ENCODE measurements at regions of chr17 and their contacts with region 1.

Region 1: GRCh38 chr17:40287494-40288369 is at the start of gene CDC6:
- DNase-seq: peak; percentile 97 to 99
- ATAC-seq: peak; percentile 97 to 99 (median 98)
- H3K4me3 ChIP-seq: peak within 1 kb of the TSS; percentile 23 to 76 (median 50)
- H3K27ac ChIP-seq: peak within 1 kb of the TSS in 5 of 10 donors; percentile 23 to 54 (median 37)
- H3K4me1 ChIP-seq: peaks cover 0 to 59% (median 33%) of the 10 kb centered on the region in 9 donors
- H3K27me3 ChIP-seq: no peaks in the 10 kb centered on the region
- CTCF ChIP-seq: no peak
- total RNA-seq, gene CDC6: 0.49 to 3.0 (median 0.86) TPM

Region 2: GRCh38 chr17:40019140-40019991 is 268.4 kb before region 1 on chr17:
- intact Hi-C with region 1: loop called in 7 of 10 experiments (anchors 5 to 10 kb)
- DNase-seq: peak in 1 of 2 donors; percentile 30
- ATAC-seq: peak in 2 of 8 donors; percentile 5 to 51
- H3K4me3 ChIP-seq: no peak overlapping the region
- H3K27ac ChIP-seq: peak overlapping the region in 5 of 10 donors; percentile 8 to 63 (median 60)
- H3K4me1 ChIP-seq: peaks cover 9 to 76% (median 53%) of the 10 kb centered on the region in 9 donors
- H3K27me3 ChIP-seq: no peaks in the 10 kb centered on the region
- CTCF ChIP-seq: no peak

Region 3: DNA sequence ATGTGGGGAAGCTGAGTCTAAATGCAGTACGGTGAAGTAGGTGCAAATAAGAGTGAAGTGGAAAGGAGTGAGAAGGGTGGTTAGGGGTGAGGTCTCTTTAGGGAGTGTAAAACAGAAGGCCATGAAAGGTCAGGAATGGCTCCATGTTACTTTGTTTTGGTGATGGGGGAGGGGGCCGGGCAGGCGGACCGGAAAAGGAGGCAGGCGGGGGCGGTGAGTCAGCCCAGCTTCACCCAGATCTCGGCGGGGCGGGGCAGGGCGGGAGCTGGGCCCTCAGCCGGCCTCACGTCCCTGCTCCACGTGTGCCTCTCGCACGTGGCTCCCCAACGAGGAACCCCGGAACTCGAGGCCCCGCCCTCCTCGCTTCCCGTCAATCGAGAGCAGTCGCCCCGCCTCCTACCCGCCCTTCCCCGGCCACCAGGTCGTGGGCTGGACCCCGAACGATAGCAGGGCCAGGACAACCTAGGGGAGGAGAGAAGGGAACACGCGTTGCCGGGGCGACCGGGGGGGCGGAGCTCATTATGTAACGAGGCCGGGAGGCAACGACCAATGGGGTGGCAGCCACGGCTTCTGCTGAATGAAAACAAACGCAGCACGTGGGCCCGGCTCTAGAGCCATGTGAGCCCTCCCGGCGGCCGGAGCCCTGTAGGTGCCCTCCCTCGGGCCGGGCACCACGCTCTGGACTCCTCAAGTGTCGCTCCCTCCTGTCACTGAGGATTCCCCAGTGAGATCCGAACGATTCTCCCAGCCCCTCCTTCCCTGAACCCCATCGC is 188.7 kb before region 1 on chr17:
- intact Hi-C with region 1: loop called in 1 of 10 experiments (anchors 10 kb)
- DNase-seq: peak; percentile 100
- ATAC-seq: peak; percentile 81 to 88 (median 84)
- H3K4me3 ChIP-seq: peak overlapping the region; percentile 59 to 100 (median 84)
- H3K27ac ChIP-seq: peak overlapping the region; percentile 81 to 99 (median 95)
- H3K4me1 ChIP-seq: peaks cover 52 to 90% (median 79%) of the 10 kb centered on the region in 9 donors
- H3K27me3 ChIP-seq: no peaks in the 10 kb centered on the region
- CTCF ChIP-seq: no peak

Region 4: DNA sequence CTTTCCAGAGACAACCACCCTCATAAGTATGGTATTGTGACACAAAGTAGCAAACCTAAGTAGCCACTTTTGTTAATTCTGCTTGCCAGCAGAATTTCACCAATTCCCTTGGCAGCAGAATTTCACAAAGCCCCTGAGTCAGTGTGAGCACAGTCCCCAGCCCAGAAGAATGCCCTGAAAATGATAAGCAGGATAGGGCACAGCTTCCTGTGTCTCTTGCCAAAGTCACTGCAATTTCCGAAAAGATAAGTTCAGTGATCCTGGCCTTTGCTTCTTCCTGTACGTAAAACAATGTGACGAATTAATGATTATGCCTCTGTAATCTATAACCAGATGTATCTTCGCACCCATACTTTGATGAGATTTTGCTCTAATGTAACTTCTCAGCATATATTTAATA is 84.6 kb before region 1 on chr17:
- intact Hi-C with region 1: loop called in 9 of 10 experiments (anchors 2 to 10 kb)
- DNase-seq: no peak
- ATAC-seq: peak in 5 of 8 donors; percentile 20 to 55 (median 32)
- H3K4me3 ChIP-seq: no peak overlapping the region
- H3K27ac ChIP-seq: peak overlapping the region in 2 of 10 donors; percentile 22 to 33
- H3K4me1 ChIP-seq: peaks cover 0 to 20% (median 11%) of the 10 kb centered on the region in 9 donors
- H3K27me3 ChIP-seq: no peaks in the 10 kb centered on the region
- CTCF ChIP-seq: no peak

Region 5: DNA sequence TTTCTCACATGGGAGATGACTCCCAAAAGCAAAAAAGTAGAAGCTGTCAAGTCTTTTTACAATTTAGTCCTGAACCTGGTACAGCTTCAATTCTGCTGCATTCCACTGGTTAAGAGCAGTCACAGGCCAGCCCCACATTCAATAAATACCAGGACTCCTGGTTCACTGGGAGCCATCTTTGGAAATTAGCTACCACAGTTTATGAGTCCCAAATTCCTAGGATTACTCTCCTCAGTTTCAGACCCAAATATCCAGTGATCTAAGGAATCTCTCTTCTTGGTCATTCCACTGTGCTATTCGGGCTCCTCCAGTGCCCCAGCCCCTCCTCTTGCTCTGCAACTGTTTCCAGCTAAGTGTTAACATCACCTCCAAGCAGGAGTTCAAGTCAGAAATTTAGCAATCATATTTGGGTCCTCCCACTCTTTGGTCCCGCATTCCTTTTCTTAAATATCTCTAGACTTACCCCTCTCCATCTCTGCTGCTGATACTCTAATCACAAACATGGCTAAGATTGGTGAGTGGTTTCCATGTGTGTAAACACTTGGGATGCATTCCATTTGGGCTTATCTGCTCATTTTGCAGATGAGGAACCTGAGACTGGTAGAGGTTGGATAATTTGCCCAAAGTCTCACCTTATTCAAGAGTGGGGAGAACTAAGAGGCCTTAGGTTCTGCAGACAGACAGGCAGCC is 78.2 kb before region 1 on chr17:
- intact Hi-C with region 1: loop called in 7 of 10 experiments (anchors 5 to 10 kb)
- DNase-seq: no peak
- ATAC-seq: no peak
- H3K4me3 ChIP-seq: no peak overlapping the region
- H3K27ac ChIP-seq: no peak overlapping the region
- H3K4me1 ChIP-seq: no peaks in the 10 kb centered on the region
- H3K27me3 ChIP-seq: no peaks in the 10 kb centered on the region
- CTCF ChIP-seq: no peak

Region 6: DNA sequence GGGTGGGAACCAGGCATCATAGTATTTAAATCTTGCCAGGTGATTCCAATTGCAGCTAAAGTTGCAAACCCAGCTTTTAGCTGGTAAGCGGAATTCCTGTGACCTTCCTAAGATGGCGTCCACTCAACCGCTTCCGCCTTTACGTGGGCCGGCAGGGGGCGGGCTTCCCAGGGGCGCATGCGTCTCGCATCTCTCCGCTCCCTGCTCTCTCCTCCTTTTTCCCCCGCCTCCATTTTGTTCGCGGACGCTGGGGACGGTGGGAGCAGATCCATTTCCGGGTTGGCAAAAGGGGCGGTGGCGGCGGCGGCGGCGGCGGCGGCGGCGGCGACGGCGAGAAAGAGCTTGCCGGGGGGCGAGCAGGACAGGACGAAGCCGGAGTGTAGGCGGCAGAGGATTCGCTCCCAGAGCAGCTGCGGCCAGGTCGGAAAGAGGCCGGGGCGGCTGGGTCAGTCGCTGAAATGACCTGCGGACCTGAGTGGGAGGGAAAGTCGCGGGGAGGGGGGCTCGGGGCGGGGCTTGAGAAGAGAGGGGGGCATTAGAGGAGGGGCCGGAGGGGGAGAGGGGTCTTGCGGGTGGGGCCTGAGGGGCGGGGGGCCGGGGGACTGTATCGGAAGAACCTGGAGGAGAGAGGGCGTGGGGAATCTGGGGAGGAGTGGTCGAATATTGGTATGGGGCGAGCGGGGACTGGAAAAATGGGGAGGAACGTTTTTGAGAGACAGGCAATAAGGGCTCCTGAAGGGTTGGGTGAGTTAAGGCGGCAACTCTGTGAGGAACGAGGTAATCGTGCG is 68.5 kb before region 1 on chr17 and contains the start of gene WIPF2:
- intact Hi-C with region 1: loop called in 6 of 10 experiments (anchors 5 kb)
- DNase-seq: peak; percentile 97 to 98
- ATAC-seq: peak; percentile 98 to 99 (median 99)
- H3K4me3 ChIP-seq: peak within 1 kb of the TSS; percentile 38 to 77 (median 65)
- H3K27ac ChIP-seq: peak within 1 kb of the TSS; percentile 51 to 96 (median 90)
- H3K4me1 ChIP-seq: peaks cover 0 to 24% (median 14%) of the 10 kb centered on the region in 9 donors
- H3K27me3 ChIP-seq: no peaks in the 10 kb centered on the region
- CTCF ChIP-seq: peak; percentile 69 to 94 (median 76)
- total RNA-seq, gene WIPF2: 8.1 to 16.0 (median 12.8) TPM

Region 7: GRCh38 chr17:40264458-40265185 is 23.1 kb before region 1 on chr17:
- intact Hi-C with region 1: no loop called
- DNase-seq: no peak
- ATAC-seq: peak in 1 of 8 donors; percentile 13
- H3K4me3 ChIP-seq: no peak overlapping the region
- H3K27ac ChIP-seq: no peak overlapping the region
- H3K4me1 ChIP-seq: peaks cover 0 to 9% (median 0%) of the 10 kb centered on the region in 9 donors
- H3K27me3 ChIP-seq: no peaks in the 10 kb centered on the region
- CTCF ChIP-seq: no peak

Measured in heart right ventricle (tissue), 16 donors.